ENCODE measurements at regions of chr12 and their contacts with region 1.

Region 1: DNA sequence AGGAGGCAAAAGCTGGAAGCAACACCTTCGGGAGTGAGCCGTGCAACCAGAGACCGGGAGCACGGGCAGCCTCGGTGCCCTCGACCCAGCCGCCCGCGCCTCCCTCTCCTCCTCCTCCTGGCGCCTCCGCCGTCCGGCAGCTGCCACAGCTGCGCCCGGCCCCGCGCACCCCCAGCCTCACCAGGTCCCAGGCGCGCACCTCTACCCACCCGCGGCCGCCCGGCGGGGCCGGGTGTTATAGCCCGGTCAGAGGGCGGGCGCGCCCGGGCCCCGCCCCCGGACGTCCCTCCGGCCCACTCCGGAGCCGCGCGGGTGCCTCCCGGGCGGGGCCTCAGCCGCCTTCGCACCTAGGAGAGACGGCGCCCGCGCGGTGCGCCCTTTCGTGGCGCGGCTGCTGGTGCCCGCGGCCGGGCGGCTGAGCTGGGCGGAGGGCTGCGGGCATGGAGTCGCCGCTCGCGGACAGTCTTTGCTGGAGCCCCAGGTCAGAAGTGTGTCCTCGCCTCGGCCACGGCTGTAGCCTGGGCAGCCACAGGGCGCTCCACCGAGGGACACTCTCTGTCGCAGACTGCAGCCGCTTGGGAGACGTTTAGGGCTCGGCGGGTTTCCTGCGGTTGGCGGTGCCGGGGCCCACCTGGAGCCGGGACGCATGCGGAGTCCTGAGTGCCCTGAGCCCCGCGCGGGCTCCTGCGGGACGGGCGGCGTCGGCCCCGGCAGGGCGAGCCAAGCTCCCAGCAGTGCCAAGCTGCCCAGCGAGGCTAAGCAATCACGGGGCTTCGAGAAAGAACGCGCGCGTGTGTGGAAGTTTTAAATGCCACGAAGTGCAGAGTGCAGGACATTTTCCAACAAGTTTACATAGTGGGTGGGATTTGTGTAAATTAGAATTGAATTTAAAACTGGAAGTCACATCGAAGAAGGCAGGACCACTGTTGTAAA is at the start of gene CPM:
- DNase-seq: peak; percentile 78
- ATAC-seq: peak; percentile 97
- H3K4me3 Mint-ChIP-seq: peak within 1 kb of the TSS; percentile 83
- H3K27ac Mint-ChIP-seq: peak within 1 kb of the TSS; percentile 28
- H3K4me1 Mint-ChIP-seq: peaks cover 9% of the 10 kb centered on the region
- H3K27me3 Mint-ChIP-seq: no peaks in the 10 kb centered on the region
- CTCF ChIP-seq: no peak
- total RNA-seq, gene CPM: 6.3 and 10.1 TPM in 2 replicates

Region 2: GRCh38 chr12:68865399-68866164 is 67.6 kb before region 1 on chr12:
- CTCF ChIA-PET with region 1: no interaction called
- POLR2A ChIA-PET with region 1: no interaction called
- intact Hi-C with region 1: loop called (anchors 5 kb)
- DNase-seq: no peak
- ATAC-seq: no peak
- H3K4me3 Mint-ChIP-seq: no peak overlapping the region
- H3K27ac Mint-ChIP-seq: no peak overlapping the region
- H3K4me1 Mint-ChIP-seq: peaks cover 18% of the 10 kb centered on the region
- H3K27me3 Mint-ChIP-seq: no peaks in the 10 kb centered on the region
- CTCF ChIP-seq: no peak

Region 3: DNA sequence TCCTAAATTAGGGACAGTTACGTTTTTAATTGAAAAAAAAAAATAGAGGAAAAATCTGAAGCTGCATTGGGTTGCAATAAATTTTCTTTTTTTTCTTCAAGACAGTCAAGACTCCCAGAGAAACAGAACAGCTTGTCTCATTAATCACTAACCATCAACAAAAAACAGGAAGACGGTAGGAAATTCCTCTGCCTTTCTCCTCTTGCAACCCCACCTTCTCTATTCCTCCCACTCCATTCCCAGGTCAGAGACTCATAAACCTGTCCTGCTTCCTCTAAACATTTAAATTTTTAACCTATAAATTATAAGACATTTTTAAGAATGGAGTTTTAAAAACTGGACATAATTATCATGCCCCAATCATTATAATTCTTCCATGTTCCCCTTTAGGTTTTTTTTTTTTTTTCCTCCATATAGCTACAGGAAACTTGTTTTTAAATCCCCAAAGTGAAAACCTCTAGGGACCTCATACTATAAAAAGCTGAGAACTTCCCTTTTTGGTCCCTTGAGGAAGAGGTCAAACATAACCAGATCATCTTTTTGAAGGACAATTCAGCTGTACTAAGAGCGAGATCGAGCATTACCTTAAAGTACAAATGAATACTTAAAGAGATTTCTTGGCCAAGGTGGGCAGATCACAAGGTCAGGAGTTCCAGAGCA is 36.2 kb before region 1 on chr12:
- CTCF ChIA-PET with region 1: no interaction called
- POLR2A ChIA-PET with region 1: interaction called, 11 read pairs
- intact Hi-C with region 1: loop called (anchors 1 kb)
- DNase-seq: no peak
- ATAC-seq: peak; percentile 90
- H3K4me3 Mint-ChIP-seq: peak overlapping the region; percentile 74
- H3K27ac Mint-ChIP-seq: peak overlapping the region; percentile 70
- H3K4me1 Mint-ChIP-seq: peaks cover 40% of the 10 kb centered on the region
- H3K27me3 Mint-ChIP-seq: no peaks in the 10 kb centered on the region
- CTCF ChIP-seq: no peak

Region 4: GRCh38 chr12:69070319-69071090 is 137.3 kb after region 1 on chr12:
- CTCF ChIA-PET with region 1: no interaction called
- POLR2A ChIA-PET with region 1: no interaction called
- intact Hi-C with region 1: loop called (anchors 5 kb)
- DNase-seq: peak; percentile 20
- ATAC-seq: peak; percentile 79
- H3K4me3 Mint-ChIP-seq: no peak overlapping the region
- H3K27ac Mint-ChIP-seq: no peak overlapping the region
- H3K4me1 Mint-ChIP-seq: no peaks in the 10 kb centered on the region
- H3K27me3 Mint-ChIP-seq: peaks cover 7% of the 10 kb centered on the region
- CTCF ChIP-seq: no peak

Region 5: GRCh38 chr12:69738351-69739286 is 805.4 kb after region 1 on chr12 and contains the start of gene RAB3IP:
- CTCF ChIA-PET with region 1: no interaction called
- POLR2A ChIA-PET with region 1: no interaction called
- intact Hi-C with region 1: loop called (anchors 2 kb)
- DNase-seq: peak; percentile 93
- ATAC-seq: peak; percentile 90
- H3K4me3 Mint-ChIP-seq: peak within 1 kb of the TSS; percentile 85
- H3K27ac Mint-ChIP-seq: peak within 1 kb of the TSS; percentile 73
- H3K4me1 Mint-ChIP-seq: peaks cover 19% of the 10 kb centered on the region
- H3K27me3 Mint-ChIP-seq: peaks cover 4% of the 10 kb centered on the region
- CTCF ChIP-seq: no peak
- total RNA-seq, gene RAB3IP: 34.6 and 37.9 TPM in 2 replicates

Measured in activated B cell treated with CpG ODN at 0.5 μM for 24 hours (primary cell).